ENCODE measurements at regions of chr11 and their contacts with region 1.

Region 1: GRCh38 chr11:18634140-18635032 is at the start of gene SPTY2D1:
- DNase-seq: peak; percentile 99
- ATAC-seq: peak; percentile 98
- H3K4me3 Mint-ChIP-seq: peak within 1 kb of the TSS; percentile 83
- H3K27ac Mint-ChIP-seq: peak within 1 kb of the TSS; percentile 95
- H3K4me1 Mint-ChIP-seq: peaks cover 21% of the 10 kb centered on the region
- H3K27me3 Mint-ChIP-seq: no peaks in the 10 kb centered on the region
- total RNA-seq, gene SPTY2D1: 17.8 to 26.4 TPM

Region 2: DNA sequence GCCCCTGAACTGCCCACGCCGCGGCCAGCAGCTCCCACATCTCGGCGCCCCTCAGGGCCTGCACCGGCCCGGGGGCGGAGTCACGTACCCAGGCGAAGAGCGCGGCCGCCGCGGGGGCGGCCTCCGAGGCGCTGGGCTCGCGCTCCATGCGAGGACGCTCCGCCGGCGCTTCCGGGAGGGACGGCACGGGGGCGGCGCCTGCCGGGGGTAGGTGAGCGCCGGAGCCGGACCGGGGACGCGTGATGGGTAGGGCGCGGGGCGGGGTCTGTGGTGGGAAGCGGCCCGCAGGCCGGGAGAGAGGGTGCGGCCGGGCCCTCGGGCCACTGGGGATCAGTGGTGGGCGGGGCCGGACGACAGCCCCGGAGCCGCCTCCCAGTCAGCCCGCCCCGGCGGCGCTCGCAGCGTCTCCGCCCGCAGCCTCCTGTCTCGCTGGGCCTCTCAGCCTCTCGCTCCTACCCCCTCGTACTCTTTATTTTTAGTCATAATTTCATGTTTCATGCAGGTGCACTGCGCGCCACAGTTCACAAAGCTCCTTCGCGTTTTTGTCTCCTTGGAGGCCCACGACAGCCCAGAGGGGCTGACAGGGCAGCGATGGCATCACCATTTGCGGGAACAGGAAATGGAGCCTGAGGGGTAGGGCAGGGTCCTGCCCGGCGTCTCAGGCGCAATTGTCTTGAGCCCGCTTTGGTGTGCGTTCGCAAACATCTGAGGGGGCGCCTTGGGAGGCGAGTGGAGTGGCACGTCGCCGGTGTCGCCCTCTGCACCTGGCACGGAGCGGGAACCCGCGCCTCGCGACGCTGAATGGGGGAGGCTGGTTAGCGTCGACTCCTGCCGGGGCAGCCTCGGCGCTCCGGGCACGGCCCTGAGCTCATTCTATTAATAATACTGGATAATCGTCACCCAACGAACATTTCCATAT is 621.3 kb before region 1 on chr11 and contains the start of gene SERGEF:
- CTCF ChIA-PET with region 1: interaction called, 3 read pairs
- POLR2A ChIA-PET with region 1: no interaction called
- intact Hi-C with region 1: loop called (anchors 1 kb)
- DNase-seq: peak; percentile 96
- ATAC-seq: peak; percentile 93
- H3K4me3 Mint-ChIP-seq: peak within 1 kb of the TSS; percentile 85
- H3K27ac Mint-ChIP-seq: peak within 1 kb of the TSS; percentile 98
- H3K4me1 Mint-ChIP-seq: peaks cover 39% of the 10 kb centered on the region
- H3K27me3 Mint-ChIP-seq: no peaks in the 10 kb centered on the region
- total RNA-seq, gene SERGEF: 47.5 to 57.5 TPM

Region 3: DNA sequence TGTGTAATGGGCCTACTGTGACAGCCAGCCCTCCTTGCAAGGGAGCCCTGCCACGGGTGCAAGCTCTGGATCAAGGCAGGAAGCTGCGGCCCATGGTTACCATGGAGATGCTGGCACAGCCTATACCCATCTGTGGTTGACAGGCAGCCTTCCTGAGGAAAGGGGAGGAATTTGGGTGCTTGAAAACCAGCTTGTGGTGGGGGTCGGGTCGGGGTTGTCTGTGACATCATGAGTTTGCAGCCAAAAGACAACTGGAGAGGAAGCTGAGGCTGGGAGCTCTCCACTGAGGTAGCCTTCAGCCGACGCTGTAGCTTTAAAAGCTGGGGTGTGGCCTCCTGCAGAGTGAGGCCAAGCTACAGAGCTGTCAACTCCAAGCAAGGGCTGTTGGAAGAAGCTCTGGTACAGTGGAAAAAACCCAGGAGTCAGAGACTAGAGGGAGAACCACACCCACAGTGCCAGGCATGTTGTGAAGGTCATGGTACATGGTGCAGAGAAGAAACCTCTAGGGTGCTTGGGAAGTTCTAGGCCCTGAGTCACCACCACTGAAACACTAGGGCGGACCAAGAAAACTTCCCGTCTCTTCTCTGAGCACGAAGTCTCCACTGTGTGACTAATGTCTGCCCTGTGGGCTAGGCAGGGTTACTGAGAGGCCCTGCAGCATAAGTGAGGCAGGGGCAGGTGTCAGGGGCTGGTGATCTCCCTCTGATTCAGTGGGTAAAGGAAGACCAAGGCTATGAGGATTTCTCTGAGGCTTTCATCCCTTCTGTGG is 250.8 kb before region 1 on chr11:
- CTCF ChIA-PET with region 1: interaction called, 3 read pairs
- POLR2A ChIA-PET with region 1: no interaction called
- intact Hi-C with region 1: loop called in 1 of 2 experiments (anchors 1 kb)
- DNase-seq: peak; percentile 89
- ATAC-seq: peak; percentile 96
- H3K4me3 Mint-ChIP-seq: peak overlapping the region; percentile 59
- H3K27ac Mint-ChIP-seq: peak overlapping the region; percentile 98
- H3K4me1 Mint-ChIP-seq: peaks cover 42% of the 10 kb centered on the region
- H3K27me3 Mint-ChIP-seq: no peaks in the 10 kb centered on the region

Region 4: GRCh38 chr11:18575361-18575760 is 59.0 kb before region 1 on chr11:
- CTCF ChIA-PET with region 1: no interaction called
- POLR2A ChIA-PET with region 1: no interaction called
- intact Hi-C with region 1: no loop called
- DNase-seq: no peak
- ATAC-seq: no peak
- H3K4me3 Mint-ChIP-seq: no peak overlapping the region
- H3K27ac Mint-ChIP-seq: no peak overlapping the region
- H3K4me1 Mint-ChIP-seq: peaks cover 9% of the 10 kb centered on the region
- H3K27me3 Mint-ChIP-seq: no peaks in the 10 kb centered on the region

Region 5: GRCh38 chr11:18588297-18589252 is 45.8 kb before region 1 on chr11 and contains the start of gene UEVLD:
- CTCF ChIA-PET with region 1: interaction called, 11 read pairs
- POLR2A ChIA-PET with region 1: interaction called, 4 read pairs
- intact Hi-C with region 1: loop called (anchors 1 kb)
- DNase-seq: peak; percentile 79
- ATAC-seq: peak; percentile 54
- H3K4me3 Mint-ChIP-seq: no peak within 1 kb of the TSS
- H3K27ac Mint-ChIP-seq: no peak within 1 kb of the TSS
- H3K4me1 Mint-ChIP-seq: peaks cover 12% of the 10 kb centered on the region
- H3K27me3 Mint-ChIP-seq: no peaks in the 10 kb centered on the region
- total RNA-seq, gene UEVLD: 14.3 to 16.0 TPM

Region 6: DNA sequence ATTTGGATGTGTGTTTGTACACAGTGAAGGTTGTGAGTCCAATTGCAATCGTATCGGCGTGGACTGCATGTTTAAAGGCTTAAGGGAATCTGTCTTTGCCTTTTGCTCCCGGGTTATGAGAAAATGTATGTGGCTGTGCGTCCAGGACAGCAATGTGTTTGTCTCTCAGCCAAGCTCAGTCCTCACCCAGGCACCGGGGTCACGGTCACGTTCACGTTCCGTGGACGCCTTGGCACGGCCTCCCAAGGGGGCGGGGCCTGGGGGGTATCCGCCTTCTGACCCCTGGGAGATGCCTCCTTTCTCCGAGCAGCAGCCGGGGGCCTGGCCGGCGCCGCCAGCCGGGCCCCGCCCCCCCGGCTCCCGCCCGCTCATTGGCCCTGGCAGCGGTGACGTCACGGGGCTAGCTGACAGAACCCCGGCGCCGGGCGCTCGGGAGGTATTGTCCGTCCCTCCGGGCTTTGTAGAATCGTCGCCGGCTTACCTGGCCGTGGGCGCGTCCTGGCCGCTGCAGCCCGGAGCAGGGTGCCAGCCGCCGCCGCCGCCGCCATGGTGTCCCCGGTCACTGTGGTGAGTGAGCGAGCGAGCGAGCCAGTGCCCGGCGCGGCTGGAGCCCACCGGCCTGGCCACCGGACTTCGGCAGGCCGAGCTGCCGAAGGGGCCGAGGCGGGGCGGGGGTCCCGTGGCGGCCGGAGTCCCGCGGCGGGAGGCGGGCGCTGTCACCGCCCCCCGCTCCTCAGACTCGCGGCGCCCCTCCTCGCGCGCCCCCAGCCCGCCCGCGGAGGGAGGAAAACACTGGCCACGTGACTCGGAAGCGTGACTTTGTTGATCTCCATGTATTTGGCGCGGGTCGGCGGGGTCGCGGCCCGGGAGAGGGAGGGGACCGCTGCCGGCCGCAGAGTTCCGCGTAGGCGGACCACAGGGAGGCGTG is 64.2 kb after region 1 on chr11 and contains the start of gene TMEM86A:
- CTCF ChIA-PET with region 1: no interaction called
- POLR2A ChIA-PET with region 1: no interaction called
- intact Hi-C with region 1: loop called (anchors 1 kb)
- DNase-seq: peak; percentile 93
- ATAC-seq: peak; percentile 96
- H3K4me3 Mint-ChIP-seq: peak within 1 kb of the TSS; percentile 72
- H3K27ac Mint-ChIP-seq: peak within 1 kb of the TSS; percentile 69
- H3K4me1 Mint-ChIP-seq: peaks cover 13% of the 10 kb centered on the region
- H3K27me3 Mint-ChIP-seq: peaks cover 3% of the 10 kb centered on the region
- total RNA-seq, gene TMEM86A: 0.09 to 0.26 TPM

Region 7: DNA sequence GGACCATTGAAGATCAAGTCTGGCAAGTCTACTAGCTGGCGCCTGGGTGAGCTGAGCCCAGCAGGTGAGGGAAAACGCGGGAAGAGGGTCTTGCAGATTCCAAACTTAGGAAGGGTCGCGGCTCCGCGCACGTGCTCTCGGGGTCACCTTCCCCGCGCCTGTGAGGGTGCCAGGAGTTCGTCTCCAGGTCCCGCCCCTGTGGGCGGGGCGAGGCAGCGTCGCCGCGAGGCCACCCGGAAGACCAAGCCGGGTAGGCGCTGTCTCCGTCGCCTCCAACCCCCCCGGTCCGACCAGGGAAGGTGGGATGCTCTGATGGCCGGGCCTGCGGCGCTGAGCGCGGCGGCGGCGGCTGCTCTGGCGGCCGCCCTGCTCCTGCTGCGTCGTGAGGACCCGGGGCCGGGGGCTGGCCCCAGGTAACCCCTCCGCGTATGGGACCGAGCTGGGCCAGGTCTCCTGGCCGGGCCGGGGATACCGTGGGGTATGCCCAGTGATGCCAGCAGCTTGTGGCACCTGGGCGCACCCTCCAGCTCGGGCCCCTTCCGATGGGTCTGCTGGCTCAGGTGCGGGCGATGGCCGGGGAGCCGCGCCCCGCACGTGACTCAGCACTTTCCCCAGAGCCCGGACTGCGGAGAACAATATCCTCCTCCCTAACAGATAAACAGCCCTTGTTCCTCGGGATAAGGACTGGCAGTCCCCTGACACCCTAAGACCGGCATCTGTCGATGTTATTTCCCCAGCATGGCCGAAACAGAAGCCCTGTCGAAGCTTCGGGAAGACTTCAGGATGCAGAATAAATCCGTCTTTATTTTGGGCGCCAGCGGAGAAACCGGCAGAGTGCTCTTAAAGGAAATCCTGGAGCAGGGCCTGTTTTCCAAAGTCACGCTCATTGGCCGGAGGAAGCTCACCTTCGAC is 1729.4 kb after region 1 on chr11 and contains the start of gene HTATIP2:
- CTCF ChIA-PET with region 1: no interaction called
- POLR2A ChIA-PET with region 1: no interaction called
- intact Hi-C with region 1: loop called in 1 of 2 experiments (anchors 10 kb)
- DNase-seq: peak; percentile 82
- ATAC-seq: peak; percentile 79
- H3K4me3 Mint-ChIP-seq: peak within 1 kb of the TSS; percentile 76
- H3K27ac Mint-ChIP-seq: peak within 1 kb of the TSS; percentile 92
- H3K4me1 Mint-ChIP-seq: peaks cover 68% of the 10 kb centered on the region
- H3K27me3 Mint-ChIP-seq: no peaks in the 10 kb centered on the region
- total RNA-seq, gene HTATIP2: 41.4 to 60.4 TPM

Measured in activated CD4-positive, alpha-beta T cell treated with anti-CD3 and anti-CD28 coated beads for 36 hours (primary cell).